ENCODE measurements at regions of chr1 and their contacts with region 1.

Region 1: GRCh38 chr1:26787706-26788514 is at the start of gene PIGV:
- DNase-seq: peak; percentile 96
- ATAC-seq: peak; percentile 88
- total RNA-seq, gene PIGV: 4.5 TPM

Region 2: DNA sequence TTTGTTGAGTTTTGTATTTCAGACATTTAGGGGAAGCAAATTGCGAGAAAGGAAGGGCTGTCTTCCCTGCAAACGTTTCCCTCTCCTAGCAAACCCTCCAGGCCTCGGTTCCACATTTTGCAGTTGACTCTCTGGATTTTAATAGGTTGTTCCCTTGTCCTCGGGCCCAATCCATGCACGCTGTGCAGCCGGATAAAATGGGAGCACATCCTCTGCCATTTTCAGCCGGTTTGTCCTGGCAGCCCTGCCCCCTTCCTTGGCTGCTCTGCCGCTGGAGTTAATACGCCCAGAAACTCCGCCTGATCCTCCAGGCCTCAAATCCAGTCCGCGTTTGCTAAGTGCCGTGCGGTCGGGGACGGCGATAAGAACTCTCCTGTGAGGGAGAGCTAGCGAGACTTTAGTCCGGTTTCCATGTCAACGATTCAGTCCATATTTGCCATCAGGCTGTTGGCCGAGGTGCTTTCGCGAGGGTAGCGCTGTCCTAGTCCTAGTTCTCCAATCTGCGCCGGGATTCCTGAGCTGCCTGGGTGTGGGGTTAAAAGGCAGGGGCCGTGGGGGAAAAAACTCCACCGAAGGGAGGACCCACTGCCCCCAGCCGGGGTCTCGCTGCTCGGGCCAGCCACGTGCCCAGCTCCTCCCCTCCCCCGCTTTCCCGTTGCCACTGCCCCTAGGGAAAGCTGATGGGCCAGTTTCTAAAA is 95.0 kb before region 1 on chr1:
- intact Hi-C with region 1: loop called (anchors 2 kb)
- DNase-seq: peak; percentile 94
- ATAC-seq: peak; percentile 69

Region 3: DNA sequence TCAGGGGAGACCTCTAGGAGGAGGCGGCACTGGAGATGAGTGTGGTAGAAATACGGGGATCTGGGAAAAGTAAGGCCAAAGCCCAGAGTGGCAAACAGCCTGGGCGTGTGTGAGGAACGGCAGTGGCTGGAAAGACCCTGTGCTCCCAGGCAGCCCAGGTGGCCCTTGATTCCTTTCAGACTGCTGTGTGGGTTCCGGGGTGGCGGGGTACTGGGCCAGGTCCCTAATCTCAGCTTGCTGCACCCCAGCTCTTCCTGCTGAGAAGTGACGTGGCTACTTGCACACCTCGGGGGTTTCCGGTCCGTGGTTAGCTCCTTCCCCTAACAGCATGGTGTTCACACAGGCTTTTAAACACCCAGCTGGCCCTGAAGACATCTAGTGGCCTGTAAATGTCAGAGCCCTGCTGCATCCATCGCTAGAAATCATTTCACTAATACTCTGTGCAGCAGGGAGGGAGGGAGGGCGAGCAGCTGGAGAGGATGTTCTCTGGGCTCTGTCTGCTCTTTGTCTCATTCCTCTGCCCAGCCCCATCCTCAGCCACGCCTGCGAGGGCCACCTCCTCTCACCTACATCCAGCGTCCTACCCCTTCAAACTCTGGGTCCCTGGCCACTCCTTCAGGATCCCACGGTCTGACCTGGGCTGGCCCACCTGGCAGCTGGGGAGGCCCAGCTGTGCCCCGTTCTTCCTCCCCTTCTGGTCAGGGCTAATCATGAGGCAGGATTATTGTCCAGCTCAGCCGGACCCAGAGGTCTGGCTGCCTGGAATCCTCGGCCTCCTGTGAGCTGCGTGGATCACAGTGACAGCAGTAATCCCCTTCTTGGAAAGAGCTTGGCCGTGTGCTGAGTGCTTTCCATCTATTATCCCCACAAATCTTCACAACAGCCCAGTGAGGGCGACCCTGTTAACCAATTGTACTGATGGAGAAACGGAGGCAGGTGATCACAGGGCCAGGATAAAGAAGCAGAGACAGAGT is 45.8 kb after region 1 on chr1:
- intact Hi-C with region 1: no loop called
- DNase-seq: peak; percentile 41
- ATAC-seq: no peak